Mammary epithelial cell (primary cell): ENCODE measurements at regions of chr1 and their contacts with region 1.

Region 1: DNA sequence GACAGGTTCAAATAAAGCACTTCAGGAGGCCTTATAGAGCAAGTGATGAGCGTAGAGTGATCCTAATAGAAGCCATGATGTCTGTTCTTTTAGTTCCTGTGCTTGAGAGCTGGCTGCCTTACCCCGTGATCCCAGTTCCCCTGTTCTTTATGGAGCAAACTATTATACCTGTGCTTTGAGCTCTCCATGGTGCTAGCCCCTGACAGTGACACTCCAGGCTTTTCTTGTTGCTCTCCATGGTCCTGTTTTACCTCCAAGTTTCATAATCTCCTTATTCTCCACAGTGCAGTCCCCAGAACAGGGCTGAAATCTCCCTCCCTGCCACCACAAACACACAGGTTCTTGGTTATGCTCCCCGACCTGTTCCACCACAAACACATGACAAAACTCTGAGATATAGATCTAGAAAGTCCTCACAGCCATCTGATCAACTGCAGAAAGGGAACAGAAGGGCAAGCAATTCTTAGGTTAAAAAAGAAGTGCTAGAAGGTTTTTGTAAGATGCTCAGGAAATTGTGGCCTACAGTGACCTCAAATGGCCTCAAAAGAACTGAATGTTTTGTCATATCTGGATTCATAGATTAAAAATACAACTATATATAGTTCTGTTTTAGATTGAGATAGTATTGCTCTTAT is 6.0 kb downstream of the CADM3 start:
- DNase-seq: peak; percentile 72
- H3K4me3 ChIP-seq: no peak overlapping the region
- H3K27ac ChIP-seq: no peak overlapping the region
- H3K4me1 ChIP-seq: no peaks in the 10 kb centered on the region
- H3K27me3 ChIP-seq: peaks cover 21% of the 10 kb centered on the region
- CTCF ChIP-seq: no peak

Region 2: GRCh38 chr1:159197561-159198557 is 20.5 kb after region 1 on chr1:
- CTCF ChIA-PET with region 1: no interaction called
- dilution Hi-C with region 1: no loop called
- in situ Hi-C with region 1: no loop called
- intact Hi-C with region 1: no loop called
- DNase-seq: peak; percentile 54
- H3K4me3 ChIP-seq: no peak overlapping the region
- H3K27ac ChIP-seq: no peak overlapping the region
- H3K4me1 ChIP-seq: no peaks in the 10 kb centered on the region
- H3K27me3 ChIP-seq: no peaks in the 10 kb centered on the region
- CTCF ChIP-seq: peak; percentile 94

Region 3: GRCh38 chr1:159501082-159501481 is 323.7 kb after region 1 on chr1:
- CTCF ChIA-PET with region 1: no interaction called
- dilution Hi-C with region 1: no loop called
- in situ Hi-C with region 1: no loop called
- intact Hi-C with region 1: no loop called
- DNase-seq: no peak
- H3K4me3 ChIP-seq: no peak overlapping the region
- H3K27ac ChIP-seq: no peak overlapping the region
- H3K4me1 ChIP-seq: no peaks in the 10 kb centered on the region
- H3K27me3 ChIP-seq: no peaks in the 10 kb centered on the region
- CTCF ChIP-seq: no peak

Region 4: GRCh38 chr1:159548126-159548525 is 370.7 kb after region 1 on chr1:
- CTCF ChIA-PET with region 1: no interaction called
- dilution Hi-C with region 1: no loop called
- in situ Hi-C with region 1: no loop called
- intact Hi-C with region 1: loop called (anchors 5 kb)
- DNase-seq: no peak
- H3K4me3 ChIP-seq: no peak overlapping the region
- H3K27ac ChIP-seq: no peak overlapping the region
- H3K4me1 ChIP-seq: no peaks in the 10 kb centered on the region
- H3K27me3 ChIP-seq: peaks cover 5% of the 10 kb centered on the region
- CTCF ChIP-seq: no peak